HepG2 (cell line): ENCODE measurements at regions of chr6 and their contacts with region 1.

Region 1: DNA sequence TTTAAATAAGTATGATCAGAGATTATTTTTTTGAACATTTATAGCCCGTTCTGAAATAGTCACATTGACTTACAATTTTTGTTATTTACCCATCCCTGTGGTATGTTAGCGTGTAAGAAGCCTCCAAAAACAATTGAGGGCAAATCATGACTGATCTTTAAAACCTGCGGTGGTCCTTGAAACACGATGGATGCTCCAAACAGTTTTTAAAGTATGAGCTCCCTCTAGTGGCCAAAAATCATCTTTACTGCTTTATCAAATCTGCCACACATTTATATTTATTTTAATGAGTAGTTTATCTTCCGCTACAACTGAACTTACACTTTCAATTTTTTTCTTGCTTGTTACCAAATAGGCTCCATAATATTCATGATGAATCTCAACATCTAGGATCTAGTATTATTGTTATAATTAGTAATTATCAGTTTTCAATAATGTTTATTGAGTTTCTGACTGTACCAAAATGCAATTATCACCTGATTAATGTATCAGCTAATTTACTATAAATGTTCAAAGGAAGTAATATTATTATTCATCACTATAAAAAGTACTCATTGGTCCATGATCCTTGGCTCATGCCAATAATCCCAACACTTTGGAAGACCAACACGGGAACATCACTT is 52.2 kb downstream of the MARCKS start:
- DNase-seq: peak; percentile 45
- ATAC-seq: peak; percentile 44; the same call in 2 of the 3 replicates
- H3K4me3 ChIP-seq: no peak overlapping the region
- H3K27ac ChIP-seq: no peak overlapping the region
- H3K4me1 ChIP-seq: peaks cover 2% of the 10 kb centered on the region
- H3K27me3 ChIP-seq: peaks cover 0 to 6% of the 10 kb centered on the region in 2 experiments; a peak in 2 of 5 replicates
- CTCF ChIP-seq: peak; percentile 63
- EP300 ChIP-seq: no peak
- POLR2A ChIP-seq: no peak
- RAD21 ChIP-seq: 0 out of 2 replicates have a peak, but pooled peaks have one; percentile 20

Region 2: GRCh38 chr6:112337209-112337638 is 1572.1 kb before region 1 on chr6:
- CTCF ChIA-PET with region 1: no interaction called
- POLR2A ChIA-PET with region 1: no interaction called
- in situ Hi-C with region 1: loop called (anchors 25 kb)
- intact Hi-C with region 1: loop called (anchors 2 kb)
- DNase-seq: peak; percentile 50
- ATAC-seq: peak; percentile 99
- H3K4me3 ChIP-seq: no peak overlapping the region
- H3K27ac ChIP-seq: no peak overlapping the region
- H3K4me1 ChIP-seq: no peaks in the 10 kb centered on the region
- H3K27me3 ChIP-seq: no peaks in the 10 kb centered on the region; a peak in 1 of 5 replicates
- CTCF ChIP-seq: peak; percentile 78
- EP300 ChIP-seq: no peak
- POLR2A ChIP-seq: no peak
- RAD21 ChIP-seq: peak; percentile 56

Region 3: DNA sequence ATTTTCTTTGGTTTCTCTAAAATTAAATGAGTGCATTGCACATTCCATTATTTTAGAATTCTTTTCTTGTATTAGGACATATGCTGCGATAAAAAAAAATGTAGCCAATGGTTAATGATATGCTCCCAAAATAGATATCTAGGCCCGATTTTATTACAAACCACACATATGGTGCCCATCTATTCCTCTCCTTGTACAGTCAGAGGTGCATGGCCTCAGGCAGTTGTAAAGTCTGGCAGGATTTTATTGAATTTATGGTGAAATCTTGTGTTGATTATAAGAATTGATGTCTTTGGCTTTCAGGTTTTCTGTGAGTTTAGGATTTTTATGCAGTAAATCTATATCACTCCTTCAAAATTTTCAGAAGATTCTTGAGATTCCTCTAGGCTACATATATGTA is 1370.0 kb before region 1 on chr6:
- CTCF ChIA-PET with region 1: no interaction called
- POLR2A ChIA-PET with region 1: no interaction called
- in situ Hi-C with region 1: no loop called
- intact Hi-C with region 1: loop called (anchors 5 kb)
- DNase-seq: no peak
- ATAC-seq: no peak
- H3K4me3 ChIP-seq: no peak overlapping the region; a peak in 1 of 6 replicates
- H3K27ac ChIP-seq: no peak overlapping the region
- H3K4me1 ChIP-seq: no peaks in the 10 kb centered on the region
- H3K27me3 ChIP-seq: no peaks in the 10 kb centered on the region
- CTCF ChIP-seq: no peak
- EP300 ChIP-seq: no peak
- POLR2A ChIP-seq: no peak
- RAD21 ChIP-seq: no peak

Region 4: GRCh38 chr6:112879920-112880413 is 1029.4 kb before region 1 on chr6:
- CTCF ChIA-PET with region 1: no interaction called
- POLR2A ChIA-PET with region 1: no interaction called
- in situ Hi-C with region 1: loop called (anchors 10 kb)
- intact Hi-C with region 1: no loop called
- DNase-seq: peak; percentile 85
- ATAC-seq: peak; percentile 100
- H3K4me3 ChIP-seq: peak overlapping the region; percentile 57 to 79 (median 79)
- H3K27ac ChIP-seq: no peak overlapping the region
- H3K4me1 ChIP-seq: 0 out of 2 replicates have a peak, but pooled peaks cover 6% of the 10 kb centered on the region
- H3K27me3 ChIP-seq: no peaks in the 10 kb centered on the region; a peak in 1 of 5 replicates
- CTCF ChIP-seq: peak; percentile 99
- EP300 ChIP-seq: no peak
- POLR2A ChIP-seq: peak; percentile 30 to 73; a peak in 2 of 4 replicates
- RAD21 ChIP-seq: peak; percentile 97